A549 (cell line): ENCODE measurements at regions of chr5 and their contacts with region 1.

Region 1: GRCh38 chr5:105536675-105537074 is 1974.1 kb upstream of the NUDT12 start:
- DNase-seq: no peak
- ATAC-seq: no peak
- H3K4me3 ChIP-seq: no peak overlapping the region
- H3K27ac ChIP-seq: no peak overlapping the region
- H3K4me1 ChIP-seq: no peaks in the 10 kb centered on the region
- CTCF ChIP-seq: no peak
- EP300 ChIP-seq: no peak
- POLR2A ChIP-seq: no peak
- RAD21 ChIP-seq: no peak

Region 2: DNA sequence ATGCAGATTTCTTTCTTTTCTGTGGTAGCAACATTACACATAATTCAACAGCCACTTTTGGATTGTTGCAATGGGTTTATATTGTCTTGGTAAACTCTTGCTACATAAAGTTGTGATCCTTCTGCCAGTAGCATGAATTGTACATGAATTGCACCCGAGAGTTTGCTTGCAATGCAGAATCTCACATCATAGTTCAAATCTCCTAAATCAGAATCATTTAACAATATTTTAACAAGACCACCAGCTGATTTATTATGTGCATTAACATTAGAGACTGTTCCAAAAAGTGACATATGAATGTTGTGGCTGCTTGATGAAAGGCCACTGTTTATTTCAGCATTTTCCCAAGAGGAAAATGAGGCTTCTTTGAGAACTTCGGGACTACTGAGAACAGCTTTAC is 482.3 kb before region 1 on chr5:
- CTCF ChIA-PET with region 1: no interaction called
- POLR2A ChIA-PET with region 1: no interaction called
- DNase-seq: no peak
- ATAC-seq: no peak
- H3K4me3 ChIP-seq: no peak overlapping the region
- H3K27ac ChIP-seq: no peak overlapping the region
- H3K4me1 ChIP-seq: no peaks in the 10 kb centered on the region
- CTCF ChIP-seq: no peak
- EP300 ChIP-seq: no peak
- POLR2A ChIP-seq: no peak
- RAD21 ChIP-seq: no peak

Region 3: GRCh38 chr5:105230516-105231157 is 306.0 kb before region 1 on chr5:
- CTCF ChIA-PET with region 1: no interaction called
- POLR2A ChIA-PET with region 1: no interaction called
- DNase-seq: no peak
- ATAC-seq: no peak
- H3K4me3 ChIP-seq: no peak overlapping the region
- H3K27ac ChIP-seq: no peak overlapping the region
- H3K4me1 ChIP-seq: no peaks in the 10 kb centered on the region
- CTCF ChIP-seq: no peak
- EP300 ChIP-seq: no peak
- POLR2A ChIP-seq: no peak
- RAD21 ChIP-seq: no peak

Region 4: GRCh38 chr5:105708442-105708841 is 171.8 kb after region 1 on chr5:
- CTCF ChIA-PET with region 1: no interaction called
- POLR2A ChIA-PET with region 1: interaction called, 11 read pairs
- DNase-seq: no peak
- ATAC-seq: no peak
- H3K4me3 ChIP-seq: no peak overlapping the region
- H3K27ac ChIP-seq: no peak overlapping the region
- H3K4me1 ChIP-seq: no peaks in the 10 kb centered on the region
- CTCF ChIP-seq: no peak
- EP300 ChIP-seq: no peak
- POLR2A ChIP-seq: no peak
- RAD21 ChIP-seq: no peak